ENCODE measurements at regions of chr6 and their contacts with region 1.

Region 1: GRCh38 chr6:35678021-35678654 is 10.6 kb downstream of the FKBP5 start:
- DNase-seq: no peak
- ATAC-seq: no peak
- H3K4me3 ChIP-seq: no peak overlapping the region
- H3K27ac ChIP-seq: no peak overlapping the region
- H3K4me1 ChIP-seq: peaks cover 6% of the 10 kb centered on the region
- H3K27me3 ChIP-seq: no peaks in the 10 kb centered on the region
- CTCF ChIP-seq: no peak
- EP300 ChIP-seq: no peak
- POLR2A ChIP-seq: no peak
- RAD21 ChIP-seq: no peak

Region 2: GRCh38 chr6:36599791-36600209 is 921.7 kb after region 1 on chr6:
- CTCF ChIA-PET with region 1: no interaction called
- POLR2A ChIA-PET with region 1: interaction called, 11 read pairs
- RAD21 ChIA-PET with region 1: no interaction called
- SMC1A ChIA-PET with region 1: no interaction called
- in situ Hi-C with region 1: no loop called
- intact Hi-C with region 1: no loop called
- DNase-seq: no peak
- ATAC-seq: peak; percentile 84
- H3K4me3 ChIP-seq: peak overlapping the region; percentile 73
- H3K27ac ChIP-seq: no peak overlapping the region
- H3K4me1 ChIP-seq: peaks cover 3% of the 10 kb centered on the region; the same call in 1 of the 2 replicates
- H3K27me3 ChIP-seq: no peaks in the 10 kb centered on the region
- CTCF ChIP-seq: no peak
- EP300 ChIP-seq: no peak
- POLR2A ChIP-seq: peak; percentile 66
- RAD21 ChIP-seq: no peak

Measured in GM12878 (cell line).